CD14-positive monocyte (primary cell): ENCODE measurements at regions of chr6 and their contacts with region 1.

Region 1: DNA sequence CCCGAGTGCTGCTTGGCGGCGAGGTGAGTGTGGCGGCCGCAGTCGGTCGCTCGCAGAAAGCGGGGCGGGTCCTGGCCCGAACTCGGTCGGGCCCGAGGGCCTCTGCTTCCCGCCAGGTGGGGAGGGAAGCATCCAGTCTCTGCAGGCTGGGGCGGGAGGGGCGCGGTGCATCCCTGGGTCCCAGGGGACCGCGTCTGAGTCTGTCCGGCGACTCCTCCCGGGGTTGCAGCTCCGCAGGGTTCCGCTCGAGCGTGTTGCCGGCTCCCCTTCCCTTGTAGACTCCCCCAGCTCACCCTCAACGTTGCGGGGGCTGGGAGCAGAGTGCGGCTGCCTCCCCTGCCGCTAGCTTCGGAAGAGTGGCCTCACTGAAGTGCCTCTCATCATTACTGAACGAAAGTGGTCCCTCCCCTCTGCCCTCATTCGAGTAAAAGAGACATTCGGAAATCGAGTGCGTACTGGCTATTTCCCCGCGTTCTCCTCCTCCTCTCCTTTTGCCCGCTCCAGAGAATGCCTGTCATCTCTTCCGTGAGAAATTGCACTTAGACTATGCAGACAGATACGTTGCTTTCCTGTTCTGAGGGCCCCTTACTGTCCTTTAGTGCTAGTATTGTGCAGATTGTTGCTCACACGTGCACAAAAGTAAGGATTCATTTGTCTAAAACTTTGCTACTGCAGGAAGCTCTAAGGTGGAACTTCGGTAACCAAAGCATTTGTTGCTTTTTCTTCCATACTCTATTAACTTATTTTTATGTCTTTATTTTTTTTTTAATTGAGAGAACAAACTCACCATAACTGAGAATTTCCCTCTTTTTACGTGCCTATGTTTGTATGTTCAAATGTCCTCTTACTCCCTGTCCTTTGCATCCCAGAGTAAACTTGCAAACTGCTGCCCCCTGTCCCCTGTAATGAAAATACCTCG is 751 bp downstream of the MAP3K4 start:
- DNase-seq: peak; percentile 11 to 46 (median 26)
- H3K4me3 ChIP-seq: peak overlapping the region; percentile 65 to 93 (median 84)
- H3K4me3 Mint-ChIP-seq: peak overlapping the region; percentile 85 to 95
- H3K27ac ChIP-seq: peak overlapping the region; percentile 45 to 80
- H3K27ac Mint-ChIP-seq: peak overlapping the region; percentile 69 to 92 (median 80)
- H3K4me1 ChIP-seq: peaks cover 22 to 36% of the 10 kb centered on the region in 2 donors
- H3K4me1 Mint-ChIP-seq: peaks cover 33% of the 10 kb centered on the region
- H3K27me3 ChIP-seq: peaks cover 3 to 5% of the 10 kb centered on the region in 2 donors
- H3K27me3 Mint-ChIP-seq: peaks cover 4 to 11% (median 6%) of the 10 kb centered on the region in 3 donors
- CTCF ChIP-seq: peak; percentile 49

Region 2: GRCh38 chr6:161161889-161162624 is 169.7 kb after region 1 on chr6:
- intact Hi-C with region 1: no loop called
- DNase-seq: no peak
- H3K4me3 ChIP-seq: no peak overlapping the region
- H3K4me3 Mint-ChIP-seq: no peak overlapping the region
- H3K27ac ChIP-seq: no peak overlapping the region
- H3K27ac Mint-ChIP-seq: peak overlapping the region in 3 of 7 donors; percentile 23 to 83 (median 42)
- H3K4me1 ChIP-seq: no peaks in the 10 kb centered on the region
- H3K4me1 Mint-ChIP-seq: no peaks in the 10 kb centered on the region
- H3K27me3 ChIP-seq: no peaks in the 10 kb centered on the region
- H3K27me3 Mint-ChIP-seq: peaks cover 0 to under 1% (median 0%) of the 10 kb centered on the region in 3 donors
- CTCF ChIP-seq: no peak

Region 3: DNA sequence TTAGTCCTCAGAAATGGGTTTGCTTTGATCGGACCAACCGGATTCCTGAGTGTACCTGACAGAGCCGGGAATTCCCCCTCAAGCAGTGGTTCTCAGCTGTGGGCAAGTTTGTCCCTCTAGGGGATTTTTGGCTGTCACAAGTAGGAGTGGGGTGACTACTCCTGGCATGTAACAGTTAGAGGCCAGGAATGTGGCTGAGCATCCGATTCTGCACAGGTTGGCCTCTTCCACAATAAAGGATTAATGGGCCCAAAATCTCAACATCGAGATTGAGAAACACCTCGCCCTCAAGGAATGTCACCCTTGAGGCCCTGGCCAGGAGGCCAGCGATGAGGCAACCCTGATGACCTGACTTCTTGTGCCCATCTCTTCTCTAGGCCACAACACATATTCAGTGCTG is 273.7 kb after region 1 on chr6:
- intact Hi-C with region 1: loop called in 1 of 2 experiments (anchors 10 kb)
- DNase-seq: no peak
- H3K4me3 ChIP-seq: no peak overlapping the region
- H3K4me3 Mint-ChIP-seq: no peak overlapping the region
- H3K27ac ChIP-seq: no peak overlapping the region
- H3K27ac Mint-ChIP-seq: no peak overlapping the region
- H3K4me1 ChIP-seq: no peaks in the 10 kb centered on the region
- H3K4me1 Mint-ChIP-seq: peaks cover 15% of the 10 kb centered on the region
- H3K27me3 ChIP-seq: no peaks in the 10 kb centered on the region
- H3K27me3 Mint-ChIP-seq: peaks cover 0 to 1% (median 0%) of the 10 kb centered on the region in 3 donors
- CTCF ChIP-seq: no peak

Region 4: GRCh38 chr6:161356167-161356854 is 364.0 kb after region 1 on chr6:
- intact Hi-C with region 1: loop called in 1 of 2 experiments (anchors 5 kb)
- DNase-seq: peak in 2 of 3 donors; percentile 30 to 68
- H3K4me3 ChIP-seq: peak overlapping the region; percentile 41 to 58 (median 44)
- H3K4me3 Mint-ChIP-seq: peak overlapping the region; percentile 81 to 95
- H3K27ac ChIP-seq: peak overlapping the region; percentile 92 to 94
- H3K27ac Mint-ChIP-seq: peak overlapping the region; percentile 98 to 100 (median 99)
- H3K4me1 ChIP-seq: peaks cover 49 to 50% of the 10 kb centered on the region in 2 donors
- H3K4me1 Mint-ChIP-seq: peaks cover 59% of the 10 kb centered on the region
- H3K27me3 ChIP-seq: no peaks in the 10 kb centered on the region
- H3K27me3 Mint-ChIP-seq: peaks cover 0 to 4% (median 3%) of the 10 kb centered on the region in 3 donors
- CTCF ChIP-seq: no peak